ENCODE measurements at regions of chr12 and their contacts with region 1.

Region 1: DNA sequence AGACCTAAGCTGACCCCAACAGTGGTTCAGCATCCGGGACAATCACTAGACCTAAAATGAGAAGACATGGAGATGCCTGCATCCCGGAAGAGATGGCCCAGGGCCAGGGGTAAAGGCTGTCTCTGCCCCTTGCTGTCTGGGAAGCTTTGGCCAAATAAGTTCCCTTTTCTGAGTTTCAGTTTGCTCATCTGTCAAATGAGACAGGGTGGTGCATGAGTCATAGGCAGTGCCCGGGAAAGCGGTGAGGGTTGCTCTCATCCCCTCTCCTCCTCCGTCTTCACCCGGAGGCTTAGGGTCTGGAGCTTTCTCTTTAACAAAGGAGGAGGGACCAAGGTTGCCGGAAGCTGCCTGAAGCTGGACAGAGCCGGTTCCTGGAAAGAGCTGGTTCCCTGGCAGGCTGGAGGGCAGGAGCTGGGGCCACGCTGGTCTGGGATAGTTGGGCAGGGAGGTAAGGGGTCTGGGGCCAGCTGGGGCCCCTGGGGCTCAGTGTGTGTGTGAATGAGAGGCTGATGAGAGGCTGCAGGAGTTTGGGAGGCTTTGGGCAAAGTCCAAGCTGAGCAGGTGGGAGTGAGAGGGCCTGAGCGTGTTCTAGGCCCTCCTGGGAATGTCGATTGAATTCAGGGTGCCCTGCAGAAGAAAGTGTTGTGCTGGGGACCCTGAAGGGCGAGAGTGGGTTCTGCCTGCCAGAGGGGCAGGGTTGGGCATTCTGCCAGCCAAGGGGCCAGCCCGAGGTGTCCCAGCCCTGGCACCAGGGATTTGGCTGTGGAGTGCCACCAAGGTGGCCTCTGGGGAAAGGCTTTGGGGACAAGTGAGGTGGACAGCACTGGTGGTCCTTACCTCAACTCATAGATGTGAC is at the start of gene SDSL:
- DNase-seq: peak; percentile 75
- H3K4me3 ChIP-seq: peak within 1 kb of the TSS; percentile 54 to 73
- H3K27ac ChIP-seq: peak within 1 kb of the TSS; percentile 64 to 67
- H3K4me1 ChIP-seq: peaks cover 0 to 5% of the 10 kb centered on the region in 2 experiments; a peak in 1 of 4 replicates
- H3K27me3 ChIP-seq: no peaks in the 10 kb centered on the region
- CTCF ChIP-seq: no peak
- EP300 ChIP-seq: no peak; a peak in 1 of 4 replicates
- RAD21 ChIP-seq: no peak
- polyA plus RNA-seq, gene SDSL: 32.4 and 33.7 TPM in 2 replicates

Region 2: GRCh38 chr12:113196996-113197395 is 225.3 kb before region 1 on chr12:
- CTCF ChIA-PET with region 1: interaction called, 42 read pairs
- POLR2A ChIA-PET with region 1: no interaction called
- DNase-seq: peak; percentile 92
- H3K4me3 ChIP-seq: no peak overlapping the region; a peak in 1 of 4 replicates
- H3K27ac ChIP-seq: no peak overlapping the region
- H3K4me1 ChIP-seq: peaks cover 15 to 28% of the 10 kb centered on the region in 2 experiments; a peak in 3 of 4 replicates
- H3K27me3 ChIP-seq: no peaks in the 10 kb centered on the region
- CTCF ChIP-seq: peak; percentile 77
- EP300 ChIP-seq: no peak
- RAD21 ChIP-seq: peak; percentile 87

Region 3: DNA sequence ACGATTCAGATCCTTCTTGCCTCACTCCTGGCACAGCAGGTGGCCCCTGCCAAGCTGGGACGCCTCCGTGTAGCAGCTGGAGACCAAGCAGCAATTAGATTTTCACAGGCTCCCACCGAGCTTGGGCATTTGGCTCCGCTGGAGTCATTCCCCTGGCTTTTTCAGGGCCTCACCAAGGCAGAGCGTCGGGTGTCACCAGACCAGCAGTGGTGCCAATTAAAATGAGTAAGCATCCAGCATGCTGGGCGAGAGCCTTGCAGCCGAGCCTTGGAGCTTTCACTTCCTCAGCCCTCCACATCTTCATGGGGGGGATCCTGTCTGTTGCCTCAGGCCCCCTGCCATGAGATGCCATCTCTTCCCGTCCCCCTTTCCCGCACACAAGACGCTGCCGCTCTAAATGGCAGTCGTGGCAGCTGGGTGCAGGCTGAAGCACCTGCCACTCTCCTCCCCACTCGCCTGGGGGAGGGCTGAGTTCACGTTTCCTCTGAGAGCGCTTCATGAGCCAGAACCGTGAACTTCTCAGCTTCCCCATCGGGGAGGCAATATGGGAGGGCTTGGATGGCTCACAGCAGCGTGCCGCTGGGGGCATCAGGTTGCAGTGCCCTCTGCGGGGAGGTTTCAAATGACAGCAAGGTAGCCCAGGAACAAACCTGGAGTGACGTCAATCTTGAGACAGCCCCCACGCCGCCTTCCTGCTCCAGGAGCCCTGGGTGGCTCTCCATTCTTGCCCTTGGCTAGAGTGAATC is 189.2 kb before region 1 on chr12:
- CTCF ChIA-PET with region 1: no interaction called
- POLR2A ChIA-PET with region 1: no interaction called
- DNase-seq: no peak
- H3K4me3 ChIP-seq: no peak overlapping the region
- H3K27ac ChIP-seq: no peak overlapping the region
- H3K4me1 ChIP-seq: peaks cover 2 to 5% of the 10 kb centered on the region in 2 experiments; a peak in 2 of 4 replicates
- H3K27me3 ChIP-seq: no peaks in the 10 kb centered on the region
- CTCF ChIP-seq: no peak
- EP300 ChIP-seq: no peak
- RAD21 ChIP-seq: no peak

Region 4: DNA sequence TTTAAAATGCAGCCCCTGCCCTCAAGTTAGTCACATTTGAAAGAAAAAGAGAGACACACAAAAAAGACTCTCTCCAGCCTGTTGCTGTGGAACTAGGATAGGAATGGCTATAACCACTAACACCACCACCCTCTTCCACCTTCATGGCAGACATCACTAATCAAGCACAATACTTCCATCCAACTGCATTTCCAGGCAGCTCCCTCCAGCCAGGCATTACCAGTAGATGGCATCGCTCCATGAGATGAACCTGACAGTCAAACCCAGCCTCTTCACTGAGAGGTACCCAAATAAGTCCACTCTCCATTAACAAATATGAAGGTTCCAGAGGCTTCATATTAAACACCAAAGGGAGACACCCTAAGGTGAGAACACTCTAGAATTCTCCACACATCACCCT is 111.8 kb before region 1 on chr12:
- CTCF ChIA-PET with region 1: interaction called, 11 read pairs
- POLR2A ChIA-PET with region 1: no interaction called
- DNase-seq: no peak
- H3K4me3 ChIP-seq: no peak overlapping the region
- H3K27ac ChIP-seq: no peak overlapping the region
- H3K4me1 ChIP-seq: no peaks in the 10 kb centered on the region
- H3K27me3 ChIP-seq: no peaks in the 10 kb centered on the region
- CTCF ChIP-seq: peak; percentile 29; the same call in 1 of the 2 replicates
- EP300 ChIP-seq: no peak
- RAD21 ChIP-seq: peak; percentile 4; the same call in 1 of the 2 replicates

Region 5: GRCh38 chr12:113432986-113433385 is 10.7 kb after region 1 on chr12:
- CTCF ChIA-PET with region 1: interaction called, 19 read pairs
- POLR2A ChIA-PET with region 1: no interaction called
- DNase-seq: no peak
- H3K4me3 ChIP-seq: no peak overlapping the region
- H3K27ac ChIP-seq: no peak overlapping the region
- H3K4me1 ChIP-seq: no peaks in the 10 kb centered on the region
- H3K27me3 ChIP-seq: no peaks in the 10 kb centered on the region
- CTCF ChIP-seq: no peak
- EP300 ChIP-seq: no peak
- RAD21 ChIP-seq: no peak

Region 6: GRCh38 chr12:113445544-113446171 is 23.4 kb after region 1 on chr12:
- CTCF ChIA-PET with region 1: interaction called, 16 read pairs
- POLR2A ChIA-PET with region 1: interaction called, 4 read pairs
- DNase-seq: no peak
- H3K4me3 ChIP-seq: no peak overlapping the region
- H3K27ac ChIP-seq: no peak overlapping the region
- H3K4me1 ChIP-seq: no peaks in the 10 kb centered on the region
- H3K27me3 ChIP-seq: no peaks in the 10 kb centered on the region; the same call in 1 of the 2 replicates
- CTCF ChIP-seq: no peak
- EP300 ChIP-seq: no peak
- RAD21 ChIP-seq: no peak

Measured in SK-N-SH (cell line).